ENCODE measurements at regions of chr11 and their contacts with region 1.

Region 1: GRCh38 chr11:33362051-33362910 is 105.1 kb downstream of the HIPK3 start:
- DNase-seq: no peak
- ATAC-seq: peak; percentile 60 to 67
- H3K4me3 ChIP-seq: no peak overlapping the region
- H3K27ac ChIP-seq: no peak overlapping the region
- H3K4me1 ChIP-seq: peaks cover 0 to 3% of the 10 kb centered on the region in 2 donors
- H3K27me3 ChIP-seq: no peaks in the 10 kb centered on the region
- CTCF ChIP-seq: peak; percentile 56 to 78 (median 63)
- POLR2A ChIP-seq: no peak

Region 2: DNA sequence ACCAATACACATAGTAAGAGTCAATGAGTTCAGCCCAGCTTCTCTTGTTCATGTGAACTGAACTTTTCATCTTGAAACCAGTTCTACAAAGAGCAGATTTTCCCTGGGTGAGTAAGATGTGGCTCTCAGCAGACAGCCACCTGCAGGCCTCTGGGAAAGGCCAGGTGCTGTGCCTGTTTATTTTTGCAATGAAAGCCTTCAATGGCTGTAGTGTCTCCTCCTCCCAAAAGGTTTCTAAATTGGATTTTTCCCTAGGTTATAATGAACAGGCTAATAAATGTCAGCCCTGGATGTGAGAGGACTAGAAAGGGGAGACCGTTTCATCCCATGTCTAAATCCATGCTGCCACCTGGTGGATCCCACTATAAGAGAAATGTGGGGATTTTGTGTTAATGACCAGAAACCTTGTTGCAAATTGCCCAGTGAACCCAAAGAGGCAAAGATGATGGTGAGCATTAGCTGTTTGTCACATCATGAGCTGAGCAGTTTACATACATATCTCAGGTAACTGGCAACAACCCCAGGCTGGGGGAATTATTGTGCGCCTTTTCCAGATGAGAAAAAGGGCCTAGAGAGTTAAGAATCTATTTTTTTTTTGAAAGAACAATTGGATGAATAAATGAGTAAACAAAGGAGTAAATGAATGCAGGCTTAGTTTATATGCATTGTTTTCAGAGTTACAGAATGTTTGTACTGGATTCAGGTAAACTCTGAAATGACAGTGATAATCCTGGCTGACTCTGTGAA is 325.6 kb after region 1 on chr11:
- in situ Hi-C with region 1: loop called (anchors 5 to 10 kb)
- intact Hi-C with region 1: loop called (anchors 2 kb)
- DNase-seq: no peak
- ATAC-seq: no peak
- H3K4me3 ChIP-seq: no peak overlapping the region
- H3K27ac ChIP-seq: peak overlapping the region in 1 of 4 donors; percentile 78
- H3K4me1 ChIP-seq: peaks cover 21 to 37% of the 10 kb centered on the region in 2 donors
- H3K27me3 ChIP-seq: no peaks in the 10 kb centered on the region
- CTCF ChIP-seq: peak; percentile 38 to 68 (median 60)
- POLR2A ChIP-seq: no peak

Region 3: DNA sequence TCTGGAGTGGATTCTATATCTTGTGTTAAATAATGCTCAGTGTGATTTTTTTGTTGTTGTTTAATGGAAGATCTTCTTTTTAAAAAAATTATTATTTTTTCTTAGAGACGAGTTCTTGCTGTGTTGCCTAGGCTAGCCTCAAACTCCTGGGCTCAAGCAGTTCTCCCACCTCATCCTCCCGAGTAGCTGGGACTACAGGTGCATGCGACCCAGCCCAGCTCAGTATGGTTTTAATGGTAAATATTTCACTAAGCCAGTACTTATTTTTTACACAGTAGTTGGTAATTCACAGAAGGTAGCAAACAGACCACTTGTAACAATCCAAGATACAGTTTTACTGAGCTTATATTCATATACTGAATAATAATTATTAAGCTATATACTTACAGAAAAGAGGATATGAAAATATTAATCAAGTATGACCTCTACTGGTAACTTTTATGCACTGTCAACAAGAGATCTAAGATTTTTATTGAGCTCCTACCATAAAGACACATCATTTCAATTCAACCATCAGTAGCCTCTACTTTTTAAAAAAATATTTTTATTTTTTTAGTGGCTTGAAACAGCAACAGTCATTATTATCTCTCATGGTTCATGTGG is 380.1 kb after region 1 on chr11:
- in situ Hi-C with region 1: loop called in 2 of 4 experiments (anchors 10 kb)
- intact Hi-C with region 1: loop called (anchors 5 kb)
- DNase-seq: no peak
- ATAC-seq: peak; percentile 50 to 74
- H3K4me3 ChIP-seq: no peak overlapping the region
- H3K27ac ChIP-seq: peak overlapping the region in 3 of 4 donors; percentile 1 to 57 (median 39)
- H3K4me1 ChIP-seq: peaks cover 10 to 13% of the 10 kb centered on the region in 2 donors
- H3K27me3 ChIP-seq: no peaks in the 10 kb centered on the region
- CTCF ChIP-seq: peak in 4 of 5 experiments; percentile 47 to 72 (median 56)
- POLR2A ChIP-seq: no peak

Region 4: GRCh38 chr11:33829433-33830141 is 467.3 kb after region 1 on chr11:
- in situ Hi-C with region 1: no loop called
- intact Hi-C with region 1: loop called (anchors 2 kb)
- DNase-seq: peak in 1 of 2 donors; percentile 44
- ATAC-seq: peak; percentile 91 to 96
- H3K4me3 ChIP-seq: peak overlapping the region; percentile 48 to 69 (median 54)
- H3K27ac ChIP-seq: no peak overlapping the region
- H3K4me1 ChIP-seq: peaks cover 6 to 9% of the 10 kb centered on the region in 2 donors
- H3K27me3 ChIP-seq: peaks cover 12 to 18% (median 15%) of the 10 kb centered on the region in 3 donors
- CTCF ChIP-seq: peak; percentile 55 to 80 (median 73)
- POLR2A ChIP-seq: no peak